Adrenal gland (tissue), 19 donors: ENCODE measurements at regions of chr7 and their contacts with region 1.

Region 1: DNA sequence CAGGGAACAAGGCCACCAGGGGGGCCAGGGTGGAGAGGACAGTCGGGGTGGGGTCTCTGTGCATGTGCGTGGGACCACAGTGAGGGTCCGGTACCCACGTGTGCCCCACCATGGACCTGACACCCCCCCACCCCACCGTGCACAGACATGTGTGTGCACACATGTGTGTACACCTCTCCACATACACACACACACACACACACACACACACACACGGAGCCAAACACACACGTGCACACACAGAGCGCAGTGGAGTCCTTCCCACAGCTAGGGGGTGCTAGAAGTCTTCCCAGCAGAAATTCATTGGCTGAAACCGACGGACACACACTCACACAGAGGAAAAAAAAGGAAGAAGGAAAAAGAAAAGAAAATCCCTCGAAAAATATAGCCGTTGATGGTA is 42.8 kb upstream of the GNA12 start:
- DNase-seq: peak; percentile 50 to 76 (median 61)
- H3K4me3 ChIP-seq: no peak overlapping the region
- H3K27ac ChIP-seq: no peak overlapping the region
- H3K4me1 ChIP-seq: no peaks in the 10 kb centered on the region
- H3K27me3 ChIP-seq: no peaks in the 10 kb centered on the region
- CTCF ChIP-seq: peak; percentile 54 to 95 (median 84)
- POLR2A ChIP-seq: no peak

Region 2: DNA sequence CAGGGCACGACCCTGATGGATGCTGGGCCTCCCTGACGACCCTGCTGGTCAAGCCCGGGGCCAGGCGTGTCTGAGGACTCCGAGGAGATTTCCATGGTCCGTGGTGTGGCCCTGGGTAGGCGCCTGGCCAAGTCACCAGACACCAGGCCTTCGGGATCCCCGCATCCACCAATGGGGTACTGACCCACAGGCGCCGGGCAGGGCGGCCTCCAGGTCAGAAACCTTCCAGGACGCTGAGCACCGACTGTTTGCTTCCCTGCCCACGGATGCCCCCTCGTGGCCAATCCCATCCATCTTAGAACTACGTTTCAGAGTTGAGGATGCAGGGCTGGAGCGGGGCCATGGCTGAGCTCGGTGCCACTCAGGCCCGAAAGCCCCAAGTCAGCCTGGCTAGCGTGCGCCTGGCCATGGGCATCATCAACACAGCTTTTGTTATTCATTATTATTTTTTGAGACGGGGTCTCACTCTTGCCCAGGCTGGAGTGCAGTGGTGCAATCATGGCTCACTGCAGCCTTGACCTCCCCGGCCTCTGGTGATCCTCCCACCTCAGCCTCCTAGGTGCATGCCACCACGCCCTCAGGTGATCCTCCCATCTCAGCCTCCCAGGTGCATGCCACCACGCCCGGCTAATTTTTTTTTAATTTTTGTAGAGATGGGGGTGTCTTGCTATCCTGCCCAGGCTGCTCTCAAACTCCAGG is 206.0 kb before region 1 on chr7:
- intact Hi-C with region 1: no loop called
- DNase-seq: peak; percentile 80 to 93 (median 89)
- H3K4me3 ChIP-seq: no peak overlapping the region
- H3K27ac ChIP-seq: no peak overlapping the region
- H3K4me1 ChIP-seq: no peaks in the 10 kb centered on the region
- H3K27me3 ChIP-seq: peaks cover 1% of the 10 kb centered on the region
- CTCF ChIP-seq: peak; percentile 59 to 88 (median 76)
- POLR2A ChIP-seq: no peak

Region 3: GRCh38 chr7:3154912-3155494 is 268.1 kb after region 1 on chr7:
- intact Hi-C with region 1: loop called in 1 of 2 experiments (anchors 5 kb)
- DNase-seq: peak in 6 of 7 donors; percentile 16 to 67 (median 50)
- H3K4me3 ChIP-seq: no peak overlapping the region
- H3K27ac ChIP-seq: no peak overlapping the region
- H3K4me1 ChIP-seq: no peaks in the 10 kb centered on the region
- H3K27me3 ChIP-seq: no peaks in the 10 kb centered on the region
- CTCF ChIP-seq: peak; percentile 28 to 81 (median 66)
- POLR2A ChIP-seq: no peak